ENCODE measurements at regions of chr11 and their contacts with region 1.

Region 1: GRCh38 chr11:117907251-117907981 is 21.8 kb downstream of the TMPRSS13 start:
- DNase-seq: peak; percentile 95 to 98 (median 97)
- ATAC-seq: peak; percentile 94
- H3K4me3 ChIP-seq: peak overlapping the region; percentile 44
- H3K27ac ChIP-seq: peak overlapping the region; percentile 84
- H3K4me1 ChIP-seq: peaks cover 35 to 36% of the 10 kb centered on the region in 2 experiments; a peak in 4 of 5 replicates
- H3K27me3 ChIP-seq: peaks cover under 1% of the 10 kb centered on the region in 2 experiments; a peak in 2 of 5 replicates
- CTCF ChIP-seq: 0 out of 6 replicates have a peak, but pooled peaks of 1 of the 3 experiments have one; percentile 1
- EP300 ChIP-seq: peak; percentile 60; the same call in 1 of the 2 replicates
- POLR2A ChIP-seq: peak; percentile 92
- RAD21 ChIP-seq: no peak

Region 2: DNA sequence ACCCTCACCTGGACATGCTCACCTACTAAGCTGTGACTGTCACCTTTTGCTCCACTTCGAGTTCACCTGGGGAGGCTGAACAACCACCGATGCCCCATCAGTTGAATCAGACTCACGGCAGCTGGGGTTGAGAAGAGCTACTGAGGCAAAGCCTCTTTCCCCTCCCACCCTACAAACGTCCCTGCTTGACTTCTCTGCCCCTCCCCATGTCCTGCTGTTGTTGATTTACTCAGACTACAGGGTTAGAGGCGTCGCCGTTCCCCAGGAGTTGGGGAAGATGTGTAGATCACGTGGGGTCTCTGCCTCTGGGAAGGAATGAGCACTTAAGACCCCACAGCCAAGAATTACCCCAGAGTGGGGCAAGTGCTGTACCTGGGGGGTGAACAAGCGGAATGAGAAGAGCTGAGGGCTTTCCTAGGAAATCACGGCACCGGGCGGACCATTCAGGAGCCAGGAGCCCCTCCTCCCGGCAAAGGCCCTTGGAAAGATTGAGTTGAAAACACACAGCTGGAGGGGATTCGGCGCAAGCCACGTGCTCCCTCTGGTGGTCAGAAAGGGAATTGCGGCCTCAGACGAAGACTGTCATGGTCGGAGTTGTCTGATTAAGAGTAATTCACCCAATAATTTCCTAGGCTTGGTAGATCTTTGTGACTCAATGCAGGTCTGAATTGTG is 89.9 kb before region 1 on chr11:
- CTCF ChIA-PET with region 1: interaction called, 3 read pairs
- POLR2A ChIA-PET with region 1: interaction called, 4 read pairs
- in situ Hi-C with region 1: no loop called
- intact Hi-C with region 1: loop called (anchors 5 kb)
- DNase-seq: peak; percentile 65 to 78 (median 76)
- ATAC-seq: peak; percentile 84
- H3K4me3 ChIP-seq: no peak overlapping the region
- H3K27ac ChIP-seq: no peak overlapping the region
- H3K4me1 ChIP-seq: peaks cover 0 to 30% of the 10 kb centered on the region in 2 experiments; a peak in 3 of 5 replicates
- H3K27me3 ChIP-seq: peaks cover 3 to 13% of the 10 kb centered on the region in 2 experiments; a peak in 3 of 5 replicates
- CTCF ChIP-seq: peak; percentile 86 to 99 (median 97)
- EP300 ChIP-seq: no peak
- POLR2A ChIP-seq: no peak
- RAD21 ChIP-seq: peak; percentile 75 to 88

Region 3: DNA sequence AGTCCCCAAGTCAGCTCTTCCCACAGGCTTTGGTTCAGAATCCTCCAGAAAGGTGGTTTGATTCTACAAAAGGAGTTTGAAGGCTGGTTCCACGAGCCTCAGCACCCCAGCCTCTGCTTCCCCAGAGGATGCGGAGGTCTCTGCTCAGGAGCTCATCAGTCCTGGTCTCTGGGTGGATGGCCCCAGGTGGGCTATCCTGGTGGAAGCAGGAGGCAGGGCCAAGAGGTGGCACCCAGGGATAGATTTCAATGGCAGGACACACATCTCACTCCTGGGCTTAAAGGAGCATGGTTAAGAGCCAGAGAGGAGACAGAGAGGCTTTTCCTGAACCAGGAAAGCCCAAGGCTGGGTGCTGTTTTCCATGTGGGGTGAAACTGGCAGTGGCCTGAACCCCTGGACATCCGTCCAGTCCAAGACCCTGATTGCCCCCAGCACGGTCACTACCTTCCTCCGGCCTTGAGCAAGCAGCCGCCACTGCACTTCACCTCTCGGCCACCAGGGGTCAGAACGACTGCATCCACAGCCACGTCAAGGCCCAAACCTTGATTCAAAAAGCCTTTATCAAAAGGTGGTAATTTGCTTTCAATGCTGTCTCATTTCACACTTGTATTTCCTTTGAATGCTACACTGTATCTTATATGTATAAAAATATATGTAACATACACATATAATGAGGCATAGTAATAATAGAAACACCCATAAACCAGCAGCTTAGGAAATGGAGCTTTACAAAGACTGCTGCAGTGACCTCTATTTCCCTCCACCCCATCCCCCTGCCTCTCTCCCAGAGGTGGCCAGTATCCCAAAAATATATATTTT is 63.5 kb before region 1 on chr11:
- CTCF ChIA-PET with region 1: interaction called, 7 read pairs
- POLR2A ChIA-PET with region 1: no interaction called
- in situ Hi-C with region 1: no loop called
- intact Hi-C with region 1: loop called (anchors 1 kb)
- DNase-seq: peak; percentile 70 to 79 (median 74)
- ATAC-seq: peak; percentile 94
- H3K4me3 ChIP-seq: no peak overlapping the region
- H3K27ac ChIP-seq: no peak overlapping the region
- H3K4me1 ChIP-seq: no peaks in the 10 kb centered on the region
- H3K27me3 ChIP-seq: peaks cover 0 to 35% of the 10 kb centered on the region in 2 experiments; a peak in 3 of 5 replicates
- CTCF ChIP-seq: peak; percentile 86 to 95 (median 94)
- EP300 ChIP-seq: no peak
- POLR2A ChIP-seq: no peak
- RAD21 ChIP-seq: peak; percentile 91 to 95

Region 4: GRCh38 chr11:117919781-117920221 is 12.4 kb after region 1 on chr11:
- CTCF ChIA-PET with region 1: no interaction called
- POLR2A ChIA-PET with region 1: interaction called, 10 read pairs
- in situ Hi-C with region 1: no loop called
- intact Hi-C with region 1: no loop called
- DNase-seq: no peak
- ATAC-seq: no peak
- H3K4me3 ChIP-seq: no peak overlapping the region
- H3K27ac ChIP-seq: no peak overlapping the region
- H3K4me1 ChIP-seq: 0 out of 5 replicates have a peak, but pooled peaks cover 0 to 3% of the 10 kb centered on the region in 2 experiments
- H3K27me3 ChIP-seq: peaks cover 20 to 63% of the 10 kb centered on the region in 2 experiments; a peak in 3 of 5 replicates
- CTCF ChIP-seq: no peak
- EP300 ChIP-seq: no peak
- POLR2A ChIP-seq: no peak
- RAD21 ChIP-seq: no peak

Region 5: DNA sequence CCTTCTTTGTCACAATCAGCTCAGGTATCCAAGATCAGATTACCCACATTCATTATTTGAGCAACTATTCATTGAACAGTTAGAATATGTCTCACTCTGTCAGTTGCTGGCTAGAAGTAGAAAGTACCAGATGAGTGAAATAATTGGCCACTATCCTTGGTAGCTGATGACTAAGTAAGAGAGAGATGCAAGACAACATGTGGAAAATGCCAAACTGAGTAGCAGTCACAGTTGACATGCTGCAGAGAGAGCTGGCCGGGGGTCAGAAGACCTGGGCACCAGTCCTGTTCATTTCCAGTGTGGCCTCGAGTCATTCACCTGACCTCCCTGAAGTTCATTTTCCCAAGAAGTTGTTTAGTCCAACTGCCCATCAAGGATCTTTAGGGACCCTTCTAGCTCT is 201.8 kb after region 1 on chr11:
- CTCF ChIA-PET with region 1: no interaction called
- POLR2A ChIA-PET with region 1: no interaction called
- in situ Hi-C with region 1: no loop called
- intact Hi-C with region 1: no loop called
- DNase-seq: no peak
- ATAC-seq: no peak
- H3K4me3 ChIP-seq: no peak overlapping the region
- H3K27ac ChIP-seq: no peak overlapping the region
- H3K4me1 ChIP-seq: peaks cover 3 to 10% of the 10 kb centered on the region in 2 experiments; a peak in 4 of 5 replicates
- H3K27me3 ChIP-seq: no peaks in the 10 kb centered on the region
- CTCF ChIP-seq: no peak
- EP300 ChIP-seq: no peak
- POLR2A ChIP-seq: no peak
- RAD21 ChIP-seq: no peak

Measured in K562 (cell line).